ENCODE measurements at regions of chr5 and their contacts with region 1.

Region 1: GRCh38 chr5:108356286-108356685 is 25.6 kb downstream of the FBXL17 start:
- DNase-seq: no peak
- ATAC-seq: peak in 1 of 2 donors; percentile 52
- H3K4me3 ChIP-seq: no peak overlapping the region
- H3K27ac ChIP-seq: peak overlapping the region in 3 of 4 donors; percentile 10 to 51 (median 47)
- H3K4me1 ChIP-seq: peaks cover 12 to 16% of the 10 kb centered on the region in 2 donors
- H3K27me3 ChIP-seq: no peaks in the 10 kb centered on the region
- CTCF ChIP-seq: no peak
- POLR2A ChIP-seq: no peak

Region 2: GRCh38 chr5:108148715-108149139 is 207.6 kb before region 1 on chr5:
- in situ Hi-C with region 1: no loop called
- intact Hi-C with region 1: loop called (anchors 10 kb)
- DNase-seq: no peak
- ATAC-seq: peak in 1 of 2 donors; percentile 26
- H3K4me3 ChIP-seq: no peak overlapping the region
- H3K27ac ChIP-seq: no peak overlapping the region
- H3K4me1 ChIP-seq: peaks cover 5 to 6% of the 10 kb centered on the region in 2 donors
- H3K27me3 ChIP-seq: no peaks in the 10 kb centered on the region
- CTCF ChIP-seq: peak in 2 of 5 experiments; percentile 25 to 44
- POLR2A ChIP-seq: no peak

Region 3: GRCh38 chr5:108451269-108451668 is 95.0 kb after region 1 on chr5:
- in situ Hi-C with region 1: no loop called
- intact Hi-C with region 1: no loop called
- DNase-seq: no peak
- ATAC-seq: no peak
- H3K4me3 ChIP-seq: no peak overlapping the region
- H3K27ac ChIP-seq: no peak overlapping the region
- H3K4me1 ChIP-seq: no peaks in the 10 kb centered on the region
- H3K27me3 ChIP-seq: no peaks in the 10 kb centered on the region
- CTCF ChIP-seq: no peak
- POLR2A ChIP-seq: no peak